Vagina (tissue), 2 donors: ENCODE measurements at regions of chr11 and their contacts with region 1.

Region 1: DNA sequence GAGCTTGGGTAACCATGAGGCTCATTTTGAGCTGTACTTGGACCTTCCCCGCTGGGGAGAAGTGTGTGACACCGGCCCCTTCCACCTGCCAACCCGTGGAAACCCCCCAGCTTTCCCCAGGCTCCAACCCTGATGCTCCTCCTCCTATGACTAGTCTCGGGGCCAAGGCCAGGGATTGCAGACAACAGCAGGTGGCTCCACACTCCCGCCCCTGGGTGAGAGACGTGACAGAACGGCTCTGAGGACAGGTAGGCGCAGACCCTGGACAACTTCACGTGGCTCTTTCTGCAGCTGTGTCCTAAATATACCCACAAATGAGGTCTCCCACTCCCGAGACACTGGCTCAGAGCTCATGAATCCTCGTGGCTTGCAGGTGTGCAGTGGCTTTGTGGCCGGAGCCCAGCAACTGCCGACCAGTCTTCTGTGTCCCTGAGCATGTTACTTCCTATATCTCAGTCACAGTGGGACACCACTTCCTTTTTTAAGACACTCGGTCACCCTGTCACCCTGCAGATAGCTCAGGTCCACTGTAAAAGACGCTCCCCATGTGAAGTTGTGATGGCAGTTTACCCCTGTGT is 55.2 kb downstream of the NECTIN1 start:
- DNase-seq: no peak
- H3K4me3 ChIP-seq: no peak overlapping the region
- H3K27ac ChIP-seq: no peak overlapping the region
- H3K4me1 ChIP-seq: peaks cover 27% of the 10 kb centered on the region
- H3K27me3 ChIP-seq: no peaks in the 10 kb centered on the region
- CTCF ChIP-seq: no peak
- POLR2A ChIP-seq: no peak

Region 2: DNA sequence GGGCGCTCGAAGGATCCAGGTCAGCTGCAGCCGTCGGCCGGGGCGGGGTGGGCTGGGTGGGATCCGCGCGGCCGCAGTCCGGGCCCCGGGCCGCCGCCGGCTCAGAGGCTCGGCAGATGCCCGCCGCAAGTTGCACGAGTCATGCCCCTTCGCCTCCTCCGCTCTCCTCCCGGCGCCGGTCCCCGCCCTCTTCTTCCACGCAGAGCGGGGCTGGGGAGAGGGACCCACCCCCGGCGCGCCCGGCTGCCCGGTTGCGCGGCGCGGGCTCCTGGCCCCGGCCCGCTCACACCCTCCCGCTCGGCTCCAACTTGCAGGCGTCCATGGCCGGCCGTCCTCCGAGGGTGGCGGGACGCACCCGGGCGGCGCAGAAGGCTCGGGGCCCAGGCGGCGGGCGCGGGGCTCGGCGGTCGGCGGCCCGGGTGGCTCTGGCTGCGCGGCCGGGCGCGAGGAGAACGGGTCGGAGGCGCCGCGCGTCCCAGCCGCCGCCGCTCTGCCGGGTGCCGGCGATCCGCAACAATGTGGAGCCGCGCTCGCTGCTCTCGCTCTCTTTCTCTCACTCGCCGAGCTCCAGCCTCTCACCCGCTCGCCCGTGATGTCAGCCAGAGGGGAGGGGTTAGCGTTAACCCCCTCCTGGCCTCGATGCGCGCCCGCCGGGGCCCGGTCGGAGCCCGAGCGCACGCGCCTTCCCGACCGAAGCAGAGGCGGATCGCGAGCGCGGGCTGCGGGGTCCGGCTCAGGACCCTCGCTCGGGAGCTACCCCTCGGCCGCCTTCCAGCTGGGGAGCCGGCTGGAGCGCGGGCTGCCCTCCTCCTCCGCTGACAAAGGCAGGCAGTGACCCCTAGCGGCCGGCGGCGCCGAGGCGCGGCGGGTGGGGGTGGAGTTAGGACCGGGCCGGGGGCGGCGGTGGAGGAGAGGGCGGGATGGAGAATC is 55.1 kb after region 1 on chr11 and contains the start of gene NECTIN1:
- intact Hi-C with region 1: loop called (anchors 5 kb)
- DNase-seq: no peak
- H3K4me3 ChIP-seq: peak within 1 kb of the TSS; percentile 83
- H3K27ac ChIP-seq: peak within 1 kb of the TSS; percentile 92
- H3K4me1 ChIP-seq: peaks cover 40% of the 10 kb centered on the region
- H3K27me3 ChIP-seq: no peaks in the 10 kb centered on the region
- CTCF ChIP-seq: peak; percentile 76 to 89 (median 82)
- POLR2A ChIP-seq: peak in 1 of 2 donors; percentile 73
- total RNA-seq, gene NECTIN1: 58.2 TPM

Region 3: GRCh38 chr11:119791701-119792151 is 117.9 kb after region 1 on chr11:
- intact Hi-C with region 1: no loop called
- DNase-seq: no peak
- H3K4me3 ChIP-seq: no peak overlapping the region
- H3K27ac ChIP-seq: no peak overlapping the region
- H3K4me1 ChIP-seq: peaks cover 8% of the 10 kb centered on the region
- H3K27me3 ChIP-seq: no peaks in the 10 kb centered on the region
- CTCF ChIP-seq: no peak
- POLR2A ChIP-seq: no peak